CD8-positive, alpha-beta memory T cell (primary cell): ENCODE measurements at regions of chr17 and their contacts with region 1.

Region 1: DNA sequence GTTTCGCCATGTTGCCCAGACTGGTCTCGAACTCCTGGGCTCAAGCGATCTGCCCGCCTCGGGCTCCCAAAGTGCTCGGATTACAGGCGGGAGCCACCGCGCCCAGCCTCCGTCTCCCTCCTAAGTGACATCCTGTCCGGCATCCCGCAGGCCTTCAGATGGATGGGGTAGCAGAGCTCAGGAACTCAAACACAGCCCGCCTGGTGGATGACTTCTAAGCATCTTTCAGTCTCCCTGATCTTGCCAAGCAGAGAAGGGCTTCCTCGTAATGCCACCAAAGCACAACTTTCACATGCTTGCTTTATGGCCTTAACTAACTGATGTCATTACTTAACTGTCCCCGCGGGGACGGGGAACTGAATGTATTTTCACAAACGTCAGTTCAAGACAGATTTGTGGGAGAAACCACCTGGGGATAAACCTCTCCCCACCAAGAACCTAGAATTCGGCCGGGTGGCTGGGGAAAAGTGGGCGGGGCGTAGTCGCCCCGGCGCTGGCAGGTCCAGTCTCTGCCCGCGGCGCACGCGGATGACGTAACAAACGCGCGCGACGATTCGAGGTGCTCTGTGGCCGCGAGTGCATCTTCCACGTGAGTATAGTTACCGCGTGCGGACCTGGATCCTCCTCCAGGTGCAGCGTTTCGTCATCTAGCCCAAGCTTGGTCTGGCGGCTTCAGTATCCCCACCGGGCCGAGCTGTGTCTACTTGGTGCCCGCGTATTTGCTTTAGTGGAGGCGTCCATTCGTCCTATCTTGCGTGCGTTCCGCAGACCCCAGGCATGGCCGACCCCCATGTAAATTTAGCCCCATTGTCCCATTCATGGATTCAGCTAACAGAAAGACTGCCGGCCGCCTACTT is at the start of gene PFAS:
- DNase-seq: peak; percentile 93 to 97 (median 95)
- H3K4me3 ChIP-seq: peak within 1 kb of the TSS; percentile 71
- H3K4me3 Mint-ChIP-seq: peak within 1 kb of the TSS; percentile 95 to 99 (median 99)
- H3K27ac ChIP-seq: peak within 1 kb of the TSS; percentile 100
- H3K27ac Mint-ChIP-seq: peak within 1 kb of the TSS; percentile 98 to 100 (median 100)
- H3K4me1 ChIP-seq: peaks cover 37% of the 10 kb centered on the region
- H3K4me1 Mint-ChIP-seq: peaks cover 45 to 52% (median 52%) of the 10 kb centered on the region in 3 donors
- H3K27me3 ChIP-seq: no peaks in the 10 kb centered on the region
- H3K27me3 Mint-ChIP-seq: peaks cover 0 to 9% of the 10 kb centered on the region in 2 donors
- total RNA-seq, gene PFAS: 167 to 168 TPM

Region 2: GRCh38 chr17:8156246-8156992 is 92.6 kb before region 1 on chr17:
- CTCF ChIA-PET with region 1: no interaction called
- POLR2A ChIA-PET with region 1: interaction called, 17 read pairs
- DNase-seq: peak; percentile 100
- H3K4me3 ChIP-seq: peak overlapping the region; percentile 100
- H3K4me3 Mint-ChIP-seq: no peak overlapping the region
- H3K27ac ChIP-seq: peak overlapping the region; percentile 100
- H3K27ac Mint-ChIP-seq: no peak overlapping the region
- H3K4me1 ChIP-seq: peaks cover 77% of the 10 kb centered on the region
- H3K4me1 Mint-ChIP-seq: peaks cover 32 to 73% (median 48%) of the 10 kb centered on the region in 3 donors
- H3K27me3 ChIP-seq: no peaks in the 10 kb centered on the region
- H3K27me3 Mint-ChIP-seq: peaks cover 0 to 14% of the 10 kb centered on the region in 2 donors

Region 3: GRCh38 chr17:8288336-8289102 is 39.5 kb after region 1 on chr17 and contains the start of gene RANGRF:
- CTCF ChIA-PET with region 1: no interaction called
- POLR2A ChIA-PET with region 1: interaction called, 12 read pairs
- DNase-seq: peak; percentile 72 to 86 (median 79)
- H3K4me3 ChIP-seq: peak within 1 kb of the TSS; percentile 92
- H3K4me3 Mint-ChIP-seq: peak within 1 kb of the TSS; percentile 94 to 98 (median 97)
- H3K27ac ChIP-seq: peak within 1 kb of the TSS; percentile 86
- H3K27ac Mint-ChIP-seq: peak within 1 kb of the TSS; percentile 91 to 99 (median 96)
- H3K4me1 ChIP-seq: peaks cover 17% of the 10 kb centered on the region
- H3K4me1 Mint-ChIP-seq: peaks cover 43 to 61% (median 50%) of the 10 kb centered on the region in 3 donors
- H3K27me3 ChIP-seq: no peaks in the 10 kb centered on the region
- H3K27me3 Mint-ChIP-seq: no peaks in the 10 kb centered on the region
- total RNA-seq, gene RANGRF: 66.2 to 71.1 TPM

Region 4: GRCh38 chr17:8294814-8295316 is 45.9 kb after region 1 on chr17:
- CTCF ChIA-PET with region 1: interaction called, 8 read pairs
- POLR2A ChIA-PET with region 1: interaction called, 51 read pairs
- DNase-seq: no peak
- H3K4me3 ChIP-seq: peak overlapping the region; percentile 87
- H3K4me3 Mint-ChIP-seq: peak overlapping the region; percentile 89 to 96 (median 92)
- H3K27ac ChIP-seq: peak overlapping the region; percentile 81
- H3K27ac Mint-ChIP-seq: peak overlapping the region; percentile 86 to 99 (median 95)
- H3K4me1 ChIP-seq: peaks cover 17% of the 10 kb centered on the region
- H3K4me1 Mint-ChIP-seq: peaks cover 31 to 44% (median 31%) of the 10 kb centered on the region in 3 donors
- H3K27me3 ChIP-seq: no peaks in the 10 kb centered on the region
- H3K27me3 Mint-ChIP-seq: peaks cover 0 to 5% of the 10 kb centered on the region in 2 donors

Region 5: DNA sequence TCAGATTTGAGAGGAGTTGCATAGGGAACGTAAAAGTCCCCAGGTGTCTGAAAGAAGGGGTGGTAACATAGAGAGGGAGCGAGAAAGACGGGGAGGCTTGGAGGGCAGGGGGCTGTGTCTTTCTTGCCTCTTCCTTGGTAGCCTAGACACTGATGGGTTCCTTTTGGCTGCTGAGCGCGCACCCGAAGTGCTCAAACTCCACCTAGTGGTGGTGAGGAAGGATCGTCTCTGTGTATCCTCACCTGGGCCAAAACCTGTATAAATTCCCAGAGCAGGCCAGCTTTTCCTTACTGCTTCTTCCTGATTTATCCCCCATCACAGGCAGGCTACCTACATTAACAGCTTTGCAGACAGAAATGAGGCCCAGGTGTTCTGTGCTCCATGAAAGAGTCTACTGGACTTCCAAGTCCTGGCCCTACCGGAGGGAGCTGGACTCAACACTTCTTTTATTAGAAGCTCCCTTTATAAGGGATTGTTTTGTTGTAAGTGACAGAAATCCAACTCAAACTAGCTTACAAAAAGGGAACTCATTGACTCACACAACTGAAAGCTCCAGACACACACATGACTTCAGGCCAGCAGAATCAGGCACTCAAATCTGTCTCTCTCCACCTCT is 51.8 kb after region 1 on chr17:
- CTCF ChIA-PET with region 1: interaction called, 10 read pairs
- POLR2A ChIA-PET with region 1: interaction called, 51 read pairs
- DNase-seq: peak; percentile 43 to 79 (median 66)
- H3K4me3 ChIP-seq: no peak overlapping the region
- H3K4me3 Mint-ChIP-seq: peak overlapping the region in 1 of 7 donors; percentile 31
- H3K27ac ChIP-seq: no peak overlapping the region
- H3K27ac Mint-ChIP-seq: peak overlapping the region in 6 of 8 donors; percentile 4 to 86 (median 24)
- H3K4me1 ChIP-seq: peaks cover 10% of the 10 kb centered on the region
- H3K4me1 Mint-ChIP-seq: peaks cover 9 to 12% (median 11%) of the 10 kb centered on the region in 3 donors
- H3K27me3 ChIP-seq: no peaks in the 10 kb centered on the region
- H3K27me3 Mint-ChIP-seq: no peaks in the 10 kb centered on the region

Region 6: GRCh38 chr17:8383143-8383822 is 134.3 kb after region 1 on chr17 and contains the start of gene RPL26:
- CTCF ChIA-PET with region 1: no interaction called
- POLR2A ChIA-PET with region 1: no interaction called
- DNase-seq: peak; percentile 88 to 98 (median 95)
- H3K4me3 ChIP-seq: peak within 1 kb of the TSS; percentile 90
- H3K4me3 Mint-ChIP-seq: peak within 1 kb of the TSS; percentile 94 to 100 (median 97)
- H3K27ac ChIP-seq: peak within 1 kb of the TSS; percentile 75
- H3K27ac Mint-ChIP-seq: peak within 1 kb of the TSS; percentile 90 to 99 (median 94)
- H3K4me1 ChIP-seq: peaks cover 52% of the 10 kb centered on the region
- H3K4me1 Mint-ChIP-seq: peaks cover 60 to 79% (median 77%) of the 10 kb centered on the region in 3 donors
- H3K27me3 ChIP-seq: no peaks in the 10 kb centered on the region
- H3K27me3 Mint-ChIP-seq: peaks cover 0 to 2% of the 10 kb centered on the region in 2 donors
- total RNA-seq, gene RPL26: 2,453 to 2,522 TPM